Ascending aorta (tissue), 2 donors: ENCODE measurements at regions of chr18 and their contacts with region 1.

Region 1: GRCh38 chr18:3447895-3448837 is 1.8 kb upstream of the TGIF1 start:
- DNase-seq: peak; percentile 89 to 97
- H3K4me3 ChIP-seq: peak overlapping the region; percentile 79 to 86
- H3K27ac ChIP-seq: peak overlapping the region; percentile 100
- H3K4me1 ChIP-seq: peaks cover 7 to 14% of the 10 kb centered on the region in 2 donors
- H3K27me3 ChIP-seq: no peaks in the 10 kb centered on the region
- CTCF ChIP-seq: peak in 1 of 3 experiments; percentile 8

Region 2: GRCh38 chr18:2857491-2858131 is 590.6 kb before region 1 on chr18:
- intact Hi-C with region 1: loop called (anchors 10 kb)
- DNase-seq: peak; percentile 36 to 94
- H3K4me3 ChIP-seq: peak overlapping the region in 1 of 2 donors; percentile 2
- H3K27ac ChIP-seq: peak overlapping the region; percentile 55 to 78
- H3K4me1 ChIP-seq: peaks cover 0 to 25% of the 10 kb centered on the region in 2 donors
- H3K27me3 ChIP-seq: no peaks in the 10 kb centered on the region
- CTCF ChIP-seq: peak in 1 of 3 experiments; percentile 9

Region 3: DNA sequence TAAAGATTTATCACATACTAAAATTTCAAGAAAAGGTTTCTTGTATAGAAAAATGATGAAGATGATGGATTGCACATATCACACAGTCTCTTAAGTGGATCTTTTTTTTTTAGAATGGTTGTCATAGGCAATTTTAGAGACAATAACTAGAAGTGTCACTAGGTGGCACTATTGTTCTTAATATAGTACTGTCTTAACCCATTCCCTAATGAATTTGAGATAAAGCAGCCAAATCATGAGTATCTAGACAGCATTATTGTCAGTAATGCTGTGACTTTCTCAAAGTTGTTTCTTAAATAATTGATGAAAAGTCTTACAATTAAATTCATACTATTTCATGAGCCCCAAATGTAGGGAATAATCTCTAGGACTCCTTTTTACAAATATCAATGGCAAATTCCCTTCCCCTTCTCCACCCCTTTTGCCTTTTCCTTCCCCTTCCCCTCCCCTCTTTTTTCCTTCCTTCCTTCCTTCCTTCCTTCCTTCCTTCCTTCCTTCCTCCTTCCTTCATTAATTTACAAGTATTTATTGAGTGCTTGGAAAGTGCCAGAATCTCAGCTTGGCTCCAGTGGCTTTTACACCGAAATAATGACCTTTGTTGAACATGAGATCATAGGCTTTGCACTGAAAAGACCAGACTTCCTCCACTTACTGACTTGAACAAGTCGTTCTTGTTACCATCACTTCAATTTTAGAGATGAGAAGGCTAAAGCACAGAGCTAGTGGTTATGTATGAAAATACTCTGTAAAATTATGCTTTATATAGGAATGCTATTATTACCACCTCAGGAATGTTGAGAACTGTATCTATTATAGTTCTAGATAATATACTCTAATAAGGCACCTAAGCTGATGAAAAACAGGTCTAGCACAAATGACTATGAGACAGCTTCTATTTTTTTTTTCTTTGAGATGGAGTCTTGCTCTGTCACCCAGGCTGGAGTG is 166.4 kb before region 1 on chr18:
- intact Hi-C with region 1: loop called (anchors 5 kb)
- DNase-seq: no peak
- H3K4me3 ChIP-seq: no peak overlapping the region
- H3K27ac ChIP-seq: no peak overlapping the region
- H3K4me1 ChIP-seq: peaks cover 0 to 3% of the 10 kb centered on the region in 2 donors
- H3K27me3 ChIP-seq: no peaks in the 10 kb centered on the region
- CTCF ChIP-seq: peak; percentile 54 to 71 (median 69)

Region 4: GRCh38 chr18:3623769-3624545 is 175.8 kb after region 1 on chr18:
- intact Hi-C with region 1: loop called (anchors 1 kb)
- DNase-seq: peak; percentile 69 to 96
- H3K4me3 ChIP-seq: peak overlapping the region; percentile 30 to 38
- H3K27ac ChIP-seq: peak overlapping the region; percentile 89 to 96
- H3K4me1 ChIP-seq: peaks cover 10 to 41% of the 10 kb centered on the region in 2 donors
- H3K27me3 ChIP-seq: no peaks in the 10 kb centered on the region
- CTCF ChIP-seq: no peak

Region 5: DNA sequence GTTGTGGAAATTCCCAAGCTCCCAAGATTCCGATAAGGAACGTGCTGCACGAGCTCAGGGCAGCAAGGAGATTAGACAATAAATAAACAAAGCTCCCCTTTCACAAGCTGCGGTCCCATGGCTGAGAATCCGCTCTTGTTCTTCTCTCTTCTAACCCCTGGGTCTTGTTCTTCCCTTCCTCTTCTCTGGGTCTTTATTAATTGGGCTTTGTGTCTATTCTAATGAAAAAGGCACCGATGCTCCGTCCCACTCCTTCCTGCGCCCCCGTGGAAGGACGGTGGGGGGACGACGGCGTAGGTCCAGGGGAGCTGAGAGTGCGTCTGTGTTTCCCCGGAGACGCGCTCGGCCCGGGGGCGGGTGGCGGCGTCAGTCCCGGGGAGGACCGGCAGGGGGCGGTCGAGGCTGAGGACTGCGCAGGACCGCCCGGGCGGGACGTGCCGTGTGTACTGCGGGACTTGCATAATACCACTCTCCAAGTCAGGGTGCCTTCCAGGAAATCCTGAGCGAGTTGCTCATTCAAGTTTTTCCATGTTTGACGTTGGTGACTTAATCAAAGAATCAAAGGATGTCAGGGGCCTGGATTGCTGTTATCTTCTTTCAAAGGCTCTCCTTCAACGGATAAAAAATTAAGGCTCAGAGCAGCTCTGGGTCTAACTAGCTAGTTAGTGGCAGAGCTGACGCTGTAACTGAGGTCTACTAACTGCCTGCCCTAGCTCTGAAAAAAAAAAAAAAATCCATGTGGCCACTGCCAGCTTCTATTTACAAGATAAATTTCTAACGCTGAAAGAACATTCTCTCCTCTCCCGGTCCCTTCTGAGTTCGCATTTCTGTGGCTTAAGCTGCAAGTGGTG is 323.2 kb after region 1 on chr18:
- intact Hi-C with region 1: loop called (anchors 5 kb)
- DNase-seq: peak; percentile 52 to 95
- H3K4me3 ChIP-seq: peak overlapping the region; percentile 57 to 58
- H3K27ac ChIP-seq: peak overlapping the region; percentile 45 to 58
- H3K4me1 ChIP-seq: peaks cover 0 to 9% of the 10 kb centered on the region in 2 donors
- H3K27me3 ChIP-seq: no peaks in the 10 kb centered on the region
- CTCF ChIP-seq: peak; percentile 94 to 95 (median 94)

Region 6: GRCh38 chr18:3983351-3983969 is 535.3 kb after region 1 on chr18:
- intact Hi-C with region 1: loop called (anchors 10 kb)
- DNase-seq: no peak
- H3K4me3 ChIP-seq: no peak overlapping the region
- H3K27ac ChIP-seq: no peak overlapping the region
- H3K4me1 ChIP-seq: peaks cover 0 to 4% of the 10 kb centered on the region in 2 donors
- H3K27me3 ChIP-seq: no peaks in the 10 kb centered on the region
- CTCF ChIP-seq: no peak